ENCODE measurements at regions of chr1 and their contacts with region 1.

Region 1: GRCh38 chr1:204763706-204764427 is 78.3 kb upstream of the LRRN2 start:
- DNase-seq: peak; percentile 40
- ATAC-seq: peak; percentile 99
- H3K4me3 ChIP-seq: no peak overlapping the region
- H3K27ac ChIP-seq: no peak overlapping the region
- H3K4me1 ChIP-seq: 0 out of 2 replicates have a peak, but pooled peaks cover 4% of the 10 kb centered on the region
- H3K27me3 ChIP-seq: peaks cover 0 to 1% of the 10 kb centered on the region in 2 experiments; a peak in 1 of 4 replicates
- CTCF ChIP-seq: peak; percentile 88 to 93 (median 92)
- EP300 ChIP-seq: no peak
- POLR2A ChIP-seq: no peak
- RAD21 ChIP-seq: peak; percentile 75

Region 2: GRCh38 chr1:204506961-204507387 is 256.9 kb before region 1 on chr1:
- CTCF ChIA-PET with region 1: interaction called, 6 read pairs
- POLR2A ChIA-PET with region 1: no interaction called
- RAD21 ChIA-PET with region 1: interaction called, 13 read pairs
- SMC1A ChIA-PET with region 1: interaction called, 6 read pairs
- in situ Hi-C with region 1: no loop called
- intact Hi-C with region 1: no loop called
- DNase-seq: peak; percentile 97
- ATAC-seq: peak; percentile 83
- H3K4me3 ChIP-seq: peak overlapping the region; percentile 77
- H3K27ac ChIP-seq: peak overlapping the region; percentile 59
- H3K4me1 ChIP-seq: peaks cover 4% of the 10 kb centered on the region
- H3K27me3 ChIP-seq: no peaks in the 10 kb centered on the region
- CTCF ChIP-seq: no peak
- EP300 ChIP-seq: peak in 1 of 2 experiments; percentile 29; a peak in 1 of 4 replicates
- POLR2A ChIP-seq: peak; percentile 42; the same call in 1 of the 2 replicates
- RAD21 ChIP-seq: no peak

Region 3: DNA sequence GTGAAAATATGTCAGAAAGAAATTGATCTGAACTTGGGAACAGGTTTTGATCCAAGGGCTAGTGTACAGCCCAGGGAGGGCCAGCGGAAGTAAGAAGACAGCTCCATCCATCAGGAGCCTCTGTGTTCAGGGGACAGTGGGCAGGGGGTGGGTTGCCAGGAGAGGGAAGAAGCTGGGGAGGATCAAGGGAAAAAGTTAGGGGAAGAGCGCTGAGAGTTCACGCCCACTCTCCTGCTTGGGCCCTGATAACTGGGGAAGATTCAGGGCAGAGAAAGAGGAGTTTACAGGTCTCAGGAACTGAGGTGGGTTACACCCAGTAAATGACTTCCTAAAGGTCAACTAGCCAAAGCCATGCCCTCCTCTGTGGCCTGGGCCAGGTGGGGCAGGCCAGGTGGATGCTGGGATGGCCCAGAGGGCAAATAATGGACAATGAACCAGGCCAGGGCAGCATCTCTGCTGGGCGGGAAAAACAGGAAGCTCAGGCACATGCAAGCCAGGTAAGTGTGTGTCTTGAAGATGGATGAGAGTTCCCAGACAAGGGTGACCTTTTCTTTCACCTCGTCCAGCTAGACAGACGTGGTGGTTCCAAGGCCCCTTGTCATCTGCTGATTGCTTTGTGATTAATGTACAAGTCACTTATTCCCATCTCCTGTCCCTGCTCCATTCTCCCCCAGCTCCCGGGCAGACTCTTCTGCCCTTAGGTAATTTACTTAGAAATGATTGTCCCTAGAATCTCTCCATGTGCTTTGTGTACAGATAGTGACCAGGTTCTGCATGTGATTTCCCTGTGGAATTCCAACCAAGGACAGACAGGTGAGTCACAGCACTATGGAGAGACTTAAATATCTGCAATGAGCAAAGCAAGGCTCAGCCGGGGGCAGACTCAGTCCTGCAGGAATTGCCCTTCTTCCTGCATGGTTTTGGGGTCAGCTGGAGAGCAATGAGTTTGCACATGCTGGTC is 190.7 kb before region 1 on chr1:
- CTCF ChIA-PET with region 1: interaction called, 138 read pairs
- POLR2A ChIA-PET with region 1: interaction called, 4 read pairs
- RAD21 ChIA-PET with region 1: interaction called, 61 read pairs
- SMC1A ChIA-PET with region 1: interaction called, 85 read pairs
- in situ Hi-C with region 1: loop called (anchors 5 kb)
- intact Hi-C with region 1: no loop called
- DNase-seq: no peak
- ATAC-seq: no peak
- H3K4me3 ChIP-seq: no peak overlapping the region
- H3K27ac ChIP-seq: no peak overlapping the region
- H3K4me1 ChIP-seq: peaks cover 4% of the 10 kb centered on the region
- H3K27me3 ChIP-seq: no peaks in the 10 kb centered on the region
- CTCF ChIP-seq: no peak
- EP300 ChIP-seq: no peak
- POLR2A ChIP-seq: no peak
- RAD21 ChIP-seq: no peak

Region 4: GRCh38 chr1:204692325-204692840 is 71.5 kb before region 1 on chr1:
- CTCF ChIA-PET with region 1: interaction called, 10 read pairs
- POLR2A ChIA-PET with region 1: no interaction called
- RAD21 ChIA-PET with region 1: no interaction called
- SMC1A ChIA-PET with region 1: interaction called, 3 read pairs
- in situ Hi-C with region 1: no loop called
- intact Hi-C with region 1: no loop called
- DNase-seq: no peak
- ATAC-seq: peak; percentile 42; the same call in 2 of the 3 replicates
- H3K4me3 ChIP-seq: no peak overlapping the region
- H3K27ac ChIP-seq: no peak overlapping the region
- H3K4me1 ChIP-seq: peaks cover 11% of the 10 kb centered on the region
- H3K27me3 ChIP-seq: peaks cover 0 to 1% of the 10 kb centered on the region in 2 experiments; a peak in 1 of 4 replicates
- CTCF ChIP-seq: peak in 2 of 3 experiments; percentile 7 to 13; a peak in 1 of 6 replicates
- EP300 ChIP-seq: no peak
- POLR2A ChIP-seq: no peak
- RAD21 ChIP-seq: no peak

Region 5: GRCh38 chr1:204714861-204715511 is 48.9 kb before region 1 on chr1:
- CTCF ChIA-PET with region 1: interaction called, 44 read pairs
- POLR2A ChIA-PET with region 1: no interaction called
- RAD21 ChIA-PET with region 1: interaction called, 23 read pairs
- SMC1A ChIA-PET with region 1: interaction called, 22 read pairs
- in situ Hi-C with region 1: no loop called
- intact Hi-C with region 1: no loop called
- DNase-seq: peak; percentile 51
- ATAC-seq: peak; percentile 77
- H3K4me3 ChIP-seq: peak overlapping the region; percentile 26
- H3K27ac ChIP-seq: peak overlapping the region; percentile 45; the same call in 1 of the 2 replicates
- H3K4me1 ChIP-seq: peaks cover 10% of the 10 kb centered on the region
- H3K27me3 ChIP-seq: no peaks in the 10 kb centered on the region
- CTCF ChIP-seq: peak in 2 of 3 experiments; percentile 18 to 32; a peak in 1 of 6 replicates
- EP300 ChIP-seq: peak; percentile 18 to 40; a peak in 2 of 4 replicates
- POLR2A ChIP-seq: no peak
- RAD21 ChIP-seq: no peak

Region 6: DNA sequence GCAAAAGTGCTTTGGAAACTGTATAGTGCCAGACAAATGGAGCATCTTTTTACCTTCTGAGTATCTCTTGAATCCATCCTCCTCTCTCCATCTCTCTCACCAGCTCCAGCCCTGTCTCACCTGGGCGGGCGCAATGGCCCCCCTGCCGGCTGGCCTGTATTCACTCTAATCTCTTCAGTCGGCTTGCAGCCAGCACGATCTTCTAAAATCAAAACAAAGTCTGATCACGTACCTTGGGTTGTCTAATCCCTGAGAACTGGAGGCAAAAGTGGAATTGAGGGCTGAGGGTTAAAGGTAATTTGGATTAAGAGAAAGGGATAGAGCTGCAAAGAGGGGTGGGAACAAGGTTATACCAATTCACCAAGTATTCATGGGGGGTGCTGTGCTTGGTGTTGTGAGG is 32.4 kb before region 1 on chr1:
- CTCF ChIA-PET with region 1: interaction called, 10 read pairs
- POLR2A ChIA-PET with region 1: no interaction called
- RAD21 ChIA-PET with region 1: no interaction called
- SMC1A ChIA-PET with region 1: interaction called, 3 read pairs
- in situ Hi-C with region 1: no loop called
- intact Hi-C with region 1: no loop called
- DNase-seq: no peak
- ATAC-seq: no peak
- H3K4me3 ChIP-seq: no peak overlapping the region
- H3K27ac ChIP-seq: no peak overlapping the region
- H3K4me1 ChIP-seq: no peaks in the 10 kb centered on the region
- H3K27me3 ChIP-seq: no peaks in the 10 kb centered on the region; a peak in 1 of 4 replicates
- CTCF ChIP-seq: no peak
- EP300 ChIP-seq: no peak
- POLR2A ChIP-seq: no peak
- RAD21 ChIP-seq: no peak

Region 7: DNA sequence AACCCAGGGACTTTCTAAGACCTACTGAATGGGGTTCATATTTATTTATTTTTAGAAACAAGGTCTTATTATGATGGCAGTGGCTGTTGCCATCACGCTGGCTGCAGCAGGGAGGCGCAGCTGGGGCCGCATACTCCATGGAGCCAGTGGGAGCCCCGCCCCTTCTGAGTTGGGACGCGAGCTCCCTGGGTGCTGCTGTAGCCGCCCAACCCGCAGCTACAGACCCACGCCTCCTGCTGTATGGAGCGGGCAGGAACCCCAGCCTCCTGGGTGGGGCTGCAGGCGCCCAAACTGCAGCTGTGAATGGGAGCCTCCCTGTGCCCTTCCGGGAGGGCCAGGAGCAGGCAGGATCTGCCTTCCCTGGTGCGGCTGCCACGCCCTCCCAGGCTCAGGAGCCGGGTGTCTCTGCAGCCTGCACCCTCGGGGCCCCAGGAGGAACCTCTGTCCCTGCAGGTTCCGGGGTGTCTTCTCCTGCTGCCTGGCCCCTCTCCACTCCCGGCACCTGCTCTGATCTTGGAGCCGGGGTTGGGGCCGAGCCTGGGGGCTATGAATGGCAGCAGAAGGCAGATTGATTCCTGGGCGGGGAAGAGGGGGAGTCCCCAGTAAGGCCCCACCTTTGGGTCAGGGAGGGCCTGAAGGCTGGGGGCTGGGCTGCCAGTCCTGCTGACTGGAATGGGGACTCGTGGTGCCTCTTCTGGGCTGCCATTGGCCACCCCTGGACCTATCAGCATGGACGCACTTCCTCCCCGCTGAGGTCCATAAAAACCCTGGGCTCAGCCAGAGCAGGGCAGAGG is 11.8 kb before region 1 on chr1:
- CTCF ChIA-PET with region 1: interaction called, 134 read pairs
- POLR2A ChIA-PET with region 1: no interaction called
- RAD21 ChIA-PET with region 1: interaction called, 4 read pairs
- SMC1A ChIA-PET with region 1: interaction called, 10 read pairs
- in situ Hi-C with region 1: no loop called
- intact Hi-C with region 1: no loop called
- DNase-seq: no peak
- ATAC-seq: no peak
- H3K4me3 ChIP-seq: no peak overlapping the region
- H3K27ac ChIP-seq: no peak overlapping the region
- H3K4me1 ChIP-seq: no peaks in the 10 kb centered on the region
- H3K27me3 ChIP-seq: peaks cover 0 to 1% of the 10 kb centered on the region in 2 experiments; a peak in 2 of 4 replicates
- CTCF ChIP-seq: no peak
- EP300 ChIP-seq: no peak
- POLR2A ChIP-seq: no peak
- RAD21 ChIP-seq: no peak

Measured in GM12878 (cell line).